ENCODE measurements at regions of chr2 and their contacts with region 1.

Region 1: DNA sequence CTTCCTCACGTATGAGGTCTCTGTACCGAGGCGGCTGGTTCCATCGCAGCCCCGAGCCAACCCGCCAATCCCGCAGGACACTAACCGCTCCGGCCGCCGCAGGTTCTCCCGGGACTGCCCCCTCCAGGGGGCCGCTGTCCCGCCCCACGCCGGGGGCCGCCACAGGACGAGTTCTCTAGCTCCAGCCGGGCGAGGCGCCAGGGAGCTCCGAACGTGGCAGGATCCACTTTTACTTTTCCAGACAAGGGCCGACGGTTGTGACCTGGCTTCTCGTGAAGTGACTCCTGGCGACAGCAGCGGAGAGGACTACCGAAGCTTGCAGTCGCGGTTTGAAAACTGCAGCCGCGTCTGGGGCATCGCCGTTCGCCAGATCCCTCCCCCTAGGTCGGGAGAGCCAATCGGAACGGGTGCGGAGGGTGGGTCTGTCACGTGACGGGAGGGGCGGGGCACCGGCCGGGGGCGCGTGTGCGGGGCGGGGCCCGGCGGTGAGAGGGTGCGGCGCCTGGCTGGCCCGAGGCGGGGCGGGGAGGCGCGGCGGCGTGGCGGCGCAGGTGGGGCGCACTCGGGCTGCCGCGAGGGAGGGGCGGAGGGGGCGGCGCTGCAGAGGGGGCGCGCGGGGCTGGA is at the start of gene STK17B:
- DNase-seq: peak; percentile 94 to 96 (median 96)
- H3K4me3 ChIP-seq: peak within 1 kb of the TSS; percentile 83 to 93 (median 91)
- H3K4me3 Mint-ChIP-seq: peak within 1 kb of the TSS; percentile 96 to 99
- H3K27ac ChIP-seq: peak within 1 kb of the TSS; percentile 86 to 87
- H3K27ac Mint-ChIP-seq: peak within 1 kb of the TSS; percentile 90 to 99 (median 97)
- H3K4me1 ChIP-seq: peaks cover 14 to 17% of the 10 kb centered on the region in 2 donors
- H3K4me1 Mint-ChIP-seq: peaks cover 26% of the 10 kb centered on the region
- H3K27me3 ChIP-seq: peaks cover 0 to 3% of the 10 kb centered on the region in 2 donors
- H3K27me3 Mint-ChIP-seq: peaks cover 0 to 4% (median 3%) of the 10 kb centered on the region in 3 donors
- CTCF ChIP-seq: no peak
- polyA plus RNA-seq, gene STK17B: 171 to 296 (median 244) TPM

Region 2: GRCh38 chr2:196205881-196206435 is 34.6 kb after region 1 on chr2:
- intact Hi-C with region 1: loop called (anchors 5 kb)
- DNase-seq: peak; percentile 21 to 85 (median 67)
- H3K4me3 ChIP-seq: no peak overlapping the region
- H3K4me3 Mint-ChIP-seq: peak overlapping the region in 1 of 2 donors; percentile 53
- H3K27ac ChIP-seq: no peak overlapping the region
- H3K27ac Mint-ChIP-seq: peak overlapping the region in 1 of 7 donors; percentile 75
- H3K4me1 ChIP-seq: peaks cover under 1 to 8% of the 10 kb centered on the region in 2 donors
- H3K4me1 Mint-ChIP-seq: peaks cover 23% of the 10 kb centered on the region
- H3K27me3 ChIP-seq: no peaks in the 10 kb centered on the region
- H3K27me3 Mint-ChIP-seq: peaks cover 0 to 2% (median 0%) of the 10 kb centered on the region in 3 donors
- CTCF ChIP-seq: no peak

Region 3: DNA sequence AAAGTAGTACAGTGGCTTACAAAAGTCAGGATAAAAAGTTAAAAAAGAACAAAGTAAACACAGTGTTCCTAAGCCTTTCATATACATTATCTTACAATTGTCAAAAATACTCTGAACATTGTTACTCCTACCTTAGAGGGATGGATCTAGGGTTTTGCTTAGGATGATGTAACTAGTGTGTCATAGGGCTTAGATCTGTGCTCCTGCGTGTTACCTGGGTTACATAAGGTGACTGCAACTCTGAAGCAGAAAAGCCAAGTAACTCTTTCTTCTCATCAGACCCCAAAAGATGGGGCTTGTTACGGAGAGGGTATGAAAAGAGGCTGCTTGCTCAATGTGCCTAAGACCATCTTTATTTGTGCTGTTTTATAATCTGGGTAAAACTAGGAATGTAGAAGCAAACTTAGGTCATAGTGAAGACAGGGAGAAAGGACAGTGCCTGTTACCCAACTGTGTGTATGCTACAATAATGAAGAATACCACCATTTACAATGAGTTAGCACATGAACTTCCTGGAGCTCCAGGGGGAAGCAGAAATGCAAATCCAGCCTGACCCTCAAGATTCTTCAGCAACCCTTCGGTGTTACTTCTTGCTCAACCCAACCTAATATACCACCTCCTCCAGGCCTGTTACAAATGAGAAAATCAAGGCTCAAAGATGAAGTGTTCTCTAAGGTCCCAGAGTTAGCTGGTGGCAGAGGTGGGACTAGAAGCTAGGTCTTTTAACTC is 42.1 kb after region 1 on chr2:
- intact Hi-C with region 1: loop called (anchors 5 kb)
- DNase-seq: peak; percentile 50 to 79 (median 54)
- H3K4me3 ChIP-seq: peak overlapping the region in 1 of 3 experiments; percentile 29
- H3K4me3 Mint-ChIP-seq: no peak overlapping the region
- H3K27ac ChIP-seq: peak overlapping the region; percentile 13 to 87
- H3K27ac Mint-ChIP-seq: peak overlapping the region; percentile 90 to 99 (median 96)
- H3K4me1 ChIP-seq: peaks cover 40 to 44% of the 10 kb centered on the region in 2 donors
- H3K4me1 Mint-ChIP-seq: peaks cover 65% of the 10 kb centered on the region
- H3K27me3 ChIP-seq: no peaks in the 10 kb centered on the region
- H3K27me3 Mint-ChIP-seq: peaks cover 0 to 3% (median 2%) of the 10 kb centered on the region in 3 donors
- CTCF ChIP-seq: no peak

Region 4: GRCh38 chr2:196239622-196240587 is 68.5 kb after region 1 on chr2:
- intact Hi-C with region 1: loop called (anchors 2 kb)
- DNase-seq: peak; percentile 90 to 97 (median 96)
- H3K4me3 ChIP-seq: peak overlapping the region in 1 of 3 experiments; percentile 58
- H3K4me3 Mint-ChIP-seq: peak overlapping the region; percentile 6 to 54
- H3K27ac ChIP-seq: peak overlapping the region; percentile 63 to 97
- H3K27ac Mint-ChIP-seq: peak overlapping the region; percentile 95 to 100 (median 98)
- H3K4me1 ChIP-seq: peaks cover 55 to 57% of the 10 kb centered on the region in 2 donors
- H3K4me1 Mint-ChIP-seq: peaks cover 57% of the 10 kb centered on the region
- H3K27me3 ChIP-seq: no peaks in the 10 kb centered on the region
- H3K27me3 Mint-ChIP-seq: peaks cover 0 to 4% (median 0%) of the 10 kb centered on the region in 3 donors
- CTCF ChIP-seq: peak; percentile 41

Region 5: GRCh38 chr2:196268538-196269338 is 97.4 kb after region 1 on chr2:
- intact Hi-C with region 1: loop called (anchors 2 to 5 kb)
- DNase-seq: peak; percentile 74 to 88 (median 74)
- H3K4me3 ChIP-seq: peak overlapping the region; percentile 26 to 62 (median 36)
- H3K4me3 Mint-ChIP-seq: peak overlapping the region; percentile 45 to 66
- H3K27ac ChIP-seq: peak overlapping the region; percentile 85 to 94
- H3K27ac Mint-ChIP-seq: peak overlapping the region; percentile 92 to 97 (median 95)
- H3K4me1 ChIP-seq: peaks cover 37 to 49% of the 10 kb centered on the region in 2 donors
- H3K4me1 Mint-ChIP-seq: peaks cover 38% of the 10 kb centered on the region
- H3K27me3 ChIP-seq: no peaks in the 10 kb centered on the region
- H3K27me3 Mint-ChIP-seq: peaks cover 0 to 1% (median 0%) of the 10 kb centered on the region in 3 donors
- CTCF ChIP-seq: no peak